A673 (cell line): ENCODE measurements at regions of chr16 and their contacts with region 1.

Region 1: GRCh38 chr16:21554795-21555585 is 44.4 kb upstream of the METTL9 start:
- DNase-seq: peak; percentile 93
- H3K4me3 ChIP-seq: no peak overlapping the region
- H3K27ac ChIP-seq: no peak overlapping the region
- H3K4me1 ChIP-seq: no peaks in the 10 kb centered on the region
- H3K27me3 ChIP-seq: peaks cover 7% of the 10 kb centered on the region
- CTCF ChIP-seq: peak; percentile 99

Region 2: GRCh38 chr16:21158208-21159110 is 396.5 kb before region 1 on chr16 and contains the start of gene LDAF1:
- CTCF ChIA-PET with region 1: no interaction called
- POLR2A ChIA-PET with region 1: no interaction called
- intact Hi-C with region 1: loop called (anchors 5 kb)
- DNase-seq: peak; percentile 88
- H3K4me3 ChIP-seq: peak within 1 kb of the TSS; percentile 67
- H3K27ac ChIP-seq: peak within 1 kb of the TSS; percentile 36
- H3K4me1 ChIP-seq: peaks cover 19% of the 10 kb centered on the region
- H3K27me3 ChIP-seq: no peaks in the 10 kb centered on the region
- CTCF ChIP-seq: no peak
- total RNA-seq, gene LDAF1: 5.9 and 7.0 TPM in 2 replicates

Region 3: GRCh38 chr16:21599233-21600030 is 44.4 kb after region 1 on chr16 and contains the start of gene METTL9:
- CTCF ChIA-PET with region 1: no interaction called
- POLR2A ChIA-PET with region 1: interaction called, 12 read pairs
- intact Hi-C with region 1: no loop called
- DNase-seq: peak; percentile 97
- H3K4me3 ChIP-seq: peak within 1 kb of the TSS; percentile 94
- H3K27ac ChIP-seq: peak within 1 kb of the TSS; percentile 95
- H3K4me1 ChIP-seq: peaks cover 19% of the 10 kb centered on the region
- H3K27me3 ChIP-seq: no peaks in the 10 kb centered on the region
- CTCF ChIP-seq: no peak
- total RNA-seq, gene METTL9: 145 and 151 TPM in 2 replicates